BJ (cell line): ENCODE measurements at regions of chr7 and their contacts with region 1.

Region 1: DNA sequence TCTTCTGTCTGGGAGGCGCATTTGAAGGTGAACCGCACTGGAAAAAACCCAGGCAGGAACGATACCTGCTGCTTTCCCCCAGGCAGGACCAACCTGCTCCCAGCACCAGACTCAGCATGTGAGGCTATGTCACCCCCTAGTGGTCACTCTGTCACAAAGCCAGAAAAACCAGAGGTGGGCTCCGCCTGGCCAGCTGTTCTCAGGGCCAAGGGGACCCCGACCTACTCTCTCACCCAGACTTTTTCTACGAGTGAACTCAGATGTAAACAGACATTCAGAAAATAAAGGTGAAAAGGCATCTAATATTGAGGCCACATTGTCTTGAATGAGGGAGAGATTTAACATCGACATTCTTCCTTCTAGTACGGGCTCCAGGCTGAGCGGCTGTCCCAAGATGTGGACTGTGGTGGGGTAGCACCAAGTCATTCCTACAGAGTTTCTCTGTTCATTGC is 117.3 kb downstream of the PRKAG2 start:
- DNase-seq: no peak
- H3K4me3 ChIP-seq: no peak overlapping the region
- H3K27me3 ChIP-seq: peaks cover 16% of the 10 kb centered on the region
- CTCF ChIP-seq: peak; percentile 93

Region 2: GRCh38 chr7:151315038-151315655 is 444.5 kb before region 1 on chr7:
- CTCF ChIA-PET with region 1: interaction called, 29 read pairs
- POLR2A ChIA-PET with region 1: no interaction called
- DNase-seq: no peak
- H3K4me3 ChIP-seq: no peak overlapping the region
- H3K27me3 ChIP-seq: peaks cover 5% of the 10 kb centered on the region; the same call in 1 of the 2 replicates
- CTCF ChIP-seq: peak; percentile 78

Region 3: GRCh38 chr7:151459726-151460473 is 299.7 kb before region 1 on chr7:
- CTCF ChIA-PET with region 1: interaction called, 34 read pairs
- POLR2A ChIA-PET with region 1: no interaction called
- DNase-seq: peak; percentile 91
- H3K4me3 ChIP-seq: peak overlapping the region; percentile 3; the same call in 1 of the 2 replicates
- H3K27me3 ChIP-seq: no peaks in the 10 kb centered on the region
- CTCF ChIP-seq: peak; percentile 61

Region 4: GRCh38 chr7:151599401-151600227 is 160.0 kb before region 1 on chr7:
- CTCF ChIA-PET with region 1: interaction called, 11 read pairs
- POLR2A ChIA-PET with region 1: no interaction called
- DNase-seq: peak; percentile 71
- H3K4me3 ChIP-seq: no peak overlapping the region
- H3K27me3 ChIP-seq: no peaks in the 10 kb centered on the region
- CTCF ChIP-seq: peak; percentile 43

Region 5: DNA sequence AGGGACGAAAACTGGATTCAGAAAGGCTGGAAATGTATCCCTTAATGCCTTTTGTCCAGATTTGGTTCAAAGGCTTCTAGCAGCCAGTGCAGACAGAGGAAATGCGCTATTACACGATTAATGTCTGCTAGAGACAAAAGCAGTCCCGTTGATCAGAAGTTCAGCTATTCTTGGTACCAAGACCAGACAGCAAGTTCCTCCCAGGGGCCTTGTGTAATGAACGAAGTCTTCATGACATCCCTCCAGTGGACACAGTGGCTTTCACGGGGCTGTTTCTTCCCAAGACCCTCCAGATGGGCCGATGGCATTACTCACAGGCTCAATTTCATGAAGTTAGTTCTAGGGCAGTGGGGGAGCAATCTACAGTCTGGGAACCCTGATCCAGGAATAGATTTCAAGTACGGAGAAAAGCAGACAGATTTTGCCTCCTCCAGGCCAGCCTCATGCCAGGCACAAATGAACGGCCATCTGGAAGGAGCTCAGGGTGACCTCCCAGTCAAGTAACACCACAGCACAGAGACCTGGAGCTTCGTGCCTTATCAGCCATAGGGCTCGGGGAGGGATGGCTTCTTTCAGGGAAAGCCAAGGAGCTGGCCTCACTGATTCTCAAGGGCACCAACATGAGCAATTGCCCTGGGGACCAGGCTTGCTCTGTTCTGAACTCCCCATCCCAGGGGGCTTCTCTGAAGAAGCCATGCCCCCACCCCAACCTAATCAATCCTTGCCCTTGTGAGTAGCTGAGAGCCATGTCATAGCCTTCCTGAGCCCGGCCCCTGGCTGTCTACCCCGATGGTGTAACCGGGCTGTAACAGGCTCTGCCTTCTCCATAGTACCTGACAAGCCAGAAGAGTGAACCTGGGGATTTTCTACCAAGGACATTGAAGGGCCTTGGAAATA is 16.2 kb after region 1 on chr7:
- CTCF ChIA-PET with region 1: interaction called, 10 read pairs
- POLR2A ChIA-PET with region 1: no interaction called
- DNase-seq: no peak
- H3K4me3 ChIP-seq: no peak overlapping the region
- H3K27me3 ChIP-seq: peaks cover 25% of the 10 kb centered on the region
- CTCF ChIP-seq: no peak